A549 (cell line): ENCODE measurements at regions of chr7 and their contacts with region 1.

Region 1: GRCh38 chr7:5854738-5855137 is 25.9 kb upstream of the OCM start:
- DNase-seq: no peak
- ATAC-seq: no peak
- H3K4me3 ChIP-seq: no peak overlapping the region
- H3K27ac ChIP-seq: no peak overlapping the region
- H3K4me1 ChIP-seq: peaks cover 3% of the 10 kb centered on the region; the same call in 1 of the 3 replicates
- CTCF ChIP-seq: no peak
- EP300 ChIP-seq: no peak
- POLR2A ChIP-seq: no peak
- RAD21 ChIP-seq: no peak

Region 2: GRCh38 chr7:5838761-5839500 is 15.8 kb before region 1 on chr7:
- CTCF ChIA-PET with region 1: interaction called, 31 read pairs
- POLR2A ChIA-PET with region 1: no interaction called
- DNase-seq: no peak
- ATAC-seq: 0 out of 6 replicates have a peak, but pooled peaks of 1 of the 2 experiments have one; percentile 13
- H3K4me3 ChIP-seq: no peak overlapping the region
- H3K27ac ChIP-seq: no peak overlapping the region
- H3K4me1 ChIP-seq: no peaks in the 10 kb centered on the region
- CTCF ChIP-seq: no peak
- EP300 ChIP-seq: no peak
- POLR2A ChIP-seq: no peak
- RAD21 ChIP-seq: no peak

Region 3: GRCh38 chr7:5870311-5870710 is 15.6 kb after region 1 on chr7:
- CTCF ChIA-PET with region 1: interaction called, 24 read pairs
- POLR2A ChIA-PET with region 1: no interaction called
- DNase-seq: no peak
- ATAC-seq: no peak
- H3K4me3 ChIP-seq: no peak overlapping the region
- H3K27ac ChIP-seq: no peak overlapping the region
- H3K4me1 ChIP-seq: peaks cover 14% of the 10 kb centered on the region; the same call in 2 of the 3 replicates
- CTCF ChIP-seq: no peak
- EP300 ChIP-seq: no peak
- POLR2A ChIP-seq: no peak
- RAD21 ChIP-seq: no peak